A549 (cell line): ENCODE measurements at regions of chrX and their contacts with region 1.

Region 1: GRCh38 chrX:153708415-153708814 is 15.8 kb downstream of the BCAP31 start:
- DNase-seq: peak; percentile 73 to 81
- ATAC-seq: peak; percentile 90 to 93
- H3K4me3 ChIP-seq: no peak overlapping the region
- H3K27ac ChIP-seq: peak overlapping the region in 1 of 2 experiments; percentile 35; a peak in 2 of 6 replicates
- H3K4me1 ChIP-seq: peaks cover 11% of the 10 kb centered on the region; the same call in 2 of the 3 replicates
- CTCF ChIP-seq: peak; percentile 63
- EP300 ChIP-seq: no peak
- POLR2A ChIP-seq: no peak
- RAD21 ChIP-seq: peak; percentile 55 to 64

Region 2: DNA sequence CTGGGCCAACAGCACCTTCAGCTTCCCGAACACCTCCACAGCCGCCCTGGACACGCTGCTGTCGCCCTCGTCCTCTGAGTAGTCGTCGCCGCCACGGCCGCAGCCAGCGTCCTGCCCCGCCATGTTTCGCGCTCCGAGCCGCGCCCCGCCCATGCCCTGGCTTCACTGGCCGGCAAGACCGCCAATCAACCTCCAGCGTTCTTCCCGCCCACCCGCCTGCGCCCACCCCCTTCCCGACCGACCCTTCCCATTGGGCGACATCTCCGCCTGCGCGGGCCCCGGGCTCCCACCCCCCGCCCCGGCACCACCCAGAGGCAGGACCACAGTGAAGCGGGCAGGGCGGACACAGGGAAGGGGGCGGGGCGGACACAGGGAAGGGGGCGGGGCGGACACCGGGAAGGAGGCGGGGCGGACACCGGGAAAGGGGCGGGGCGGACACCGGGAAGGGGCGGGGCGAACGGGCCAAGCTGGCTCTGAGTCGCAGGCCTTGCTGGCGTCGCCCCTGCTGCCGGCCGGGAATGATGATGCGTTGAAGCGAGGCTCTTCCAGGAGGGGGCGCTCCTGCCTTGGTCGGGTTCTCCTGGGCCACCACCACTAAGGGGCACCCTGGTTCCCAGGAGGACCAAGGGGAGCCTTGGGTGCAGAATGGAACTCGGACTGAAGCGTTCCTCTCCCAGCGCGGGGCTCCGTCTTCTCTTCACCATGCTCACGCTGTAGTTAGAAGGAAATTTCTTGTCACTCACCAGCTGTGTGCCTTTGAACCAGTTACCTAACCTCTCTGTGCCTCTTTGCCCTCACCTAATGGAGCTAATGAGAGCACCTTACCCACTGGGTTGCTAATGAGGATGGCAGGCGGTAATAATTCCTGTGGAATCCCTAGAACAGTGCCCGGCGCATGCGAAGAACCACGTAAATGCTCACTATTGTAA is 237.7 kb before region 1 on chrX and contains the start of gene HAUS7:
- CTCF ChIA-PET with region 1: no interaction called
- POLR2A ChIA-PET with region 1: no interaction called
- DNase-seq: peak; percentile 85 to 93
- ATAC-seq: peak; percentile 87 to 90
- H3K4me3 ChIP-seq: peak within 1 kb of the TSS; percentile 75
- H3K27ac ChIP-seq: peak within 1 kb of the TSS; percentile 64 to 90
- H3K4me1 ChIP-seq: peaks cover 3% of the 10 kb centered on the region; the same call in 1 of the 3 replicates
- CTCF ChIP-seq: peak; percentile 77
- EP300 ChIP-seq: no peak
- POLR2A ChIP-seq: peak; percentile 60
- RAD21 ChIP-seq: peak; percentile 57 to 63
- polyA plus RNA-seq, gene HAUS7: 30.3 and 39.1 TPM in 2 replicates

Region 3: DNA sequence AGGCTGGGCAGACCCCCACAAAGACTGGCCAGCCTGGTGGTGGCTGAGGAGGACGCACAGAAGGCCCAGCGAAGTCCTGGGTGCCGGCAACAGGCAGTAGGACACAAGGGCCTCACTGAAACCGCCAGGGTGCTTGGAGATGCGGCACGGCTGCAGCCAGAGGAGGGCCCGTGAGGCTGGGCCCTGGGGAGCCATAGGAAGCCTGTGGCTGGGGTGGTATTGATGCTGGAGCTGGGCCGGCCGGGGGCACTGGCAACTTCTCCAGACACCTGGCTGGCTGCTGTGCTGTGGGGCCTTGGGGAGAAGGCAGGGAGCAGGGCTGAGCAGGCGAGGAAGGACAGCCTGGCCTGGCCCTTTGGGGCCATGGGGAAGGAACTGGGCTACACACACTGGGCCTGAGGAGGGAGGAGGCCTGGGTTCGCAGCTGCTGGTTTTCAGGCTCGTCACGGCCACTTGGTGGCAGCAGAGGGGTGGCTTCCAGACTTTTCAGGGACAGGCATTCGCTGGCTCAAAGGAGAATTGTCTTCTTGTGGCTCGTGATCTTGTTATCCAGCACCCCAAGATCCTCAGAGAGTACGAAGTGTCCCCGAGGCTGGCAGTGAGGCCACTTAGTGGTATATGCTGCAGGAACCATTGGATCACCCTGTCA is 153.8 kb before region 1 on chrX:
- CTCF ChIA-PET with region 1: interaction called, 18 read pairs
- POLR2A ChIA-PET with region 1: no interaction called
- DNase-seq: peak; percentile 60 to 62
- ATAC-seq: peak; percentile 80 to 94
- H3K4me3 ChIP-seq: no peak overlapping the region
- H3K27ac ChIP-seq: no peak overlapping the region
- H3K4me1 ChIP-seq: no peaks in the 10 kb centered on the region
- CTCF ChIP-seq: peak; percentile 62
- EP300 ChIP-seq: no peak
- POLR2A ChIP-seq: no peak
- RAD21 ChIP-seq: peak; percentile 68 to 74

Region 4: DNA sequence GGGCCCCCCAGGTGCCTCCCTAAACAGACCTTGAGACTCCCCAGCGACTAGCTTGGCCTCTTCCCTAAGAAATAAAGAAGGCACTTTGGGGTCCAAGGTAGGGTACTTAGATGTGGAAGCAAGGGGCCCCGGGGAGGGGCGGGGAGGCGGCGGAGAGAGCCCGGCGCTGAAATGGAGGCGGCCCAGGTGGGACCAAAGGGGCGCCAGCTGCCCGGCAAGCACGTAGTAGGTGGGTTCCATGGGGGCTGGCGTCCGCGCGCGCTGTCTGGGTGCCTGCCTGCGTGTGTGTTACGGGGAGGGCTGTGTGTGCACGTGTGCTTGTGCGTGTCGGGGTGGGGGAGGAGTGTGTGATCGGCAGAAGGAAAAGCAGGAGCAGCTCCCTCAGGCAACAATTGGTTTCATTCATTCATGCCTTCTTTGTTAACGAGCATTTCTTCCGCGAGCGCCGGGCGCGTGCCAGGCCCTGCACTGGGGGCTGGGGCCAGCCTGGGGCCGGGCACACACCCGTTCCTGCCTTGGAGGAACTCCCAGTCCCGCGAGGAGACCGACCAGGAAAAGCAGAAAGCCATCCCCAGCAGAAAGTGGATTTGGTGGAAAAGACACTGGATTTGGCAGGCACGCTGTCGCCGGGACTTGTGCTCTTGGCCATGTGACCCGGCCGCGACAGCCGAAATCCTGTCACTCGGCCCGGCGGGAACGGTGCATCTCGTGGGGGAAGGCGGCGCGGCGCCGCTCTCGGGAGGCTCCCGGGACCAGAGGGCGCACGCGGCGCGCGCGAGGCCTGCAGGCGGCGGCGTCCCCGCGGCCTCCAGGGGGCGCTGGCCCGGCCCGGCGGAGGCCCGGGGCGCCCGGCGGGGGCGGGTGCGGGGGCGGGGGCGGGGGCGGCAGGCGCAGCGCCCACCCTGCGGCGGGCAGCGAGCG is 64.7 kb before region 1 on chrX:
- CTCF ChIA-PET with region 1: interaction called, 11 read pairs
- POLR2A ChIA-PET with region 1: no interaction called
- DNase-seq: peak; percentile 43 to 44
- ATAC-seq: peak; percentile 58 to 61; a peak in 5 of 6 replicates
- H3K4me3 ChIP-seq: peak overlapping the region; percentile 59
- H3K27ac ChIP-seq: peak overlapping the region; percentile 65 to 88
- H3K4me1 ChIP-seq: peaks cover 31% of the 10 kb centered on the region; the same call in 2 of the 3 replicates
- CTCF ChIP-seq: peak; percentile 58
- EP300 ChIP-seq: no peak
- POLR2A ChIP-seq: no peak
- RAD21 ChIP-seq: no peak

Region 5: GRCh38 chrX:153719238-153719637 is 10.8 kb after region 1 on chrX:
- CTCF ChIA-PET with region 1: interaction called, 27 read pairs
- POLR2A ChIA-PET with region 1: interaction called, 3 read pairs
- DNase-seq: no peak
- ATAC-seq: no peak
- H3K4me3 ChIP-seq: no peak overlapping the region
- H3K27ac ChIP-seq: no peak overlapping the region
- H3K4me1 ChIP-seq: peaks cover 9% of the 10 kb centered on the region; the same call in 2 of the 3 replicates
- CTCF ChIP-seq: no peak
- EP300 ChIP-seq: no peak
- POLR2A ChIP-seq: no peak
- RAD21 ChIP-seq: no peak

Region 6: GRCh38 chrX:153816831-153817690 is 108.6 kb after region 1 on chrX:
- CTCF ChIA-PET with region 1: no interaction called
- POLR2A ChIA-PET with region 1: no interaction called
- DNase-seq: no peak
- ATAC-seq: peak in 1 of 2 experiments; percentile 53; a peak in 3 of 6 replicates
- H3K4me3 ChIP-seq: no peak overlapping the region
- H3K27ac ChIP-seq: no peak overlapping the region
- H3K4me1 ChIP-seq: no peaks in the 10 kb centered on the region; the same call in 2 of the 3 replicates
- CTCF ChIP-seq: no peak
- EP300 ChIP-seq: no peak
- POLR2A ChIP-seq: no peak
- RAD21 ChIP-seq: no peak